ENCODE measurements at regions of chrX and their contacts with region 1.

Region 1: GRCh38 chrX:57821703-57822375 is 88.4 kb downstream of the ZXDA start:
- DNase-seq: no peak

Region 2: DNA sequence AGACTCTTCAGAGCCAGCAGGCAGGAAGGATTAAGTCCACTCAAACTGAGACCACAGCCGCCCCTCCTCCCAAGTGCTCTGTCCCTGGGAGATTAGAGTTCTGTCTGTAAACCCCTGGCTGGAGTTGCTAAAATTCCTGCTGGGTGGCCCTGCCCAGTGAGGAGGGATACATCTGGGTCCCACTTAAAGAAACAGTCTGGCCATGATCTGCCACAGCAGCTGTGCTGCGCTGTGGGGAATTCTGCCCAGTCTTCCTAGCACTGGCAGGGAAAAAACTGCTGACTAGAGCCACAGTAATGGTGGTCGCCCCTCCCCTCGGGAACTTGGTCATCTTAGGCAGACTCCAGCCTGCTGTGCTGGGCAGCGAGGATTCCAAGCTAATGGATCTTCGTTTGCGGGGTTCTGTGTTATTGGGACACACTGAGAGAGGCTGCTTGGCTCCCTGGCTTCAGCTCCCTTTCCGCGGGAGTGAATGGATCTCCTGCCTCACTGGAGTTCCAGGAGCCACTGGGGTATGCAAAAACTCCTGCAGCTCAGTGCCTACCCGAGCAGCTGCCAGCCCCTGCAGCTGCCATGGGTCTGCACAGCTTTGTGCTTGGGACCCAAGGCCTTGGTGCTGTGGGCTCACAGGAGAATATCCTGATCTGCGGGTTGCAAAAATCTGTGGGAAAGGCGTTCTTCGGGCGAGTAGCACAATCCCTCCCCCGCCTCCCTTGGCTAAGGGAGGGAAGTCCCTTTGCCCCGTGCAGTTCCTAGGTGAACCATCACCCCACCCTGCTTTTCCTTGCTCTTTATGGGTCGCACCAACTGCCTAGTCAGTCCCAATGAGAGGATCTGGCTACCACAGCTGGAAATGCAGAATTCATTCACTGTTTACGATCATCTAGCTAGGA is 214.3 kb before region 1 on chrX:
- intact Hi-C with region 1: no loop called
- DNase-seq: no peak

Region 3: DNA sequence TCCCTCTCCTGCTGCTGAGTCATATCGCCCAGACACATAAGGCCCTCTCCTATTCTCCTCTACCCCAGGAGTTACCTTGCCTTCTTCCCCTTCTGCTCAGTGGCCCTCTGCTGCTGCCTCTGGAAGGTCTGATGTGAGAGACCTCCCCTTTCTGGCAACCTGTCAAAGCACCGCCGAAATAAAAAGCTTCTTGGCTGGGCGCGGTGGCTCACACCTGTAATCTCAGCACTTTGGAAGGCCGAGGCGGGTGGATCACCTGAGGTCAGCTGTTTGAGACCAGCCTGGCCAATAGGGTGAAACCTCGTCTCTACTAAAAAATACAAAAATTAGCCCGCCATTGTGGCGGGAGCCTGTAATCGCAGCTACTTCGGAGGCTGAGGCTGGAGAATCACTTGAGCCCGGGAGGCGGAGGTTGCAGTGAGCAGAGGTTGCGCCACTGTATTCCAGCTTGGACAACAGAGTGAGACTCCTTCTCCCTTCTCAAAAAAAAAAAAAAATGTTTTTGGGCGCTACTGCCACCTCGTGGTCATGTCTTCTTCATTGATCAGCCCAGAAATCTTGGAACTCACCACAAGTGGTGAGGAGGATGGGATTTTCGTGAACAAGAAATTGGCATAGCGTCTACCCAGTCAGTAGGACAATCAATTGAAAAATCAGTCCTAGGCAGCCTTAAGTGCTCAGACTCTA is 97.1 kb after region 1 on chrX:
- intact Hi-C with region 1: loop called (anchors 2 kb)
- DNase-seq: no peak

Region 4: DNA sequence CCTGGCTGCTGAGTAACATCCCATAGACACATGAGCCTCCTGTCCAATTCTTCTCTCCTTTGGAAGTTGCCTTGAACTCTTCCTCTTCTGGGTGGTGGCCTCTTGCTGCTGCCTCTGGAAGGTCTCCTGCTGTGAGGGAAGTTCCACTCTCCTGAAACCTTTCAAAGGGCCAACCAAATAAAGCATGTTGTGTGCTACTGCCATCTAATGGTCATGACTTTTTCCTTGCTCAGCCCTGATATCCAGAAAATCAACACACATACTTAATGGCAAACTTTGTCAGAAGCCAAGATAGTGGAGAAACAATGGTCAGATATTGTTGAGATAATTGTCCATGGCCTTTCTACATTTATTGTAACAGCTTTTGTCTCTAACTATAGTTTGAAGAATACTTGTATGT is 107.5 kb after region 1 on chrX:
- intact Hi-C with region 1: loop called (anchors 2 kb)
- DNase-seq: no peak